ENCODE measurements at regions of chr19 and their contacts with region 1.

Region 1: GRCh38 chr19:19900729-19901444 is at the start of gene ZNF93:
- H3K4me3 ChIP-seq: peak within 1 kb of the TSS; percentile 67
- H3K27ac ChIP-seq: no peak within 1 kb of the TSS
- H3K4me1 ChIP-seq: no peaks in the 10 kb centered on the region
- CTCF ChIP-seq: no peak

Region 2: GRCh38 chr19:19721896-19722295 is 179.0 kb before region 1 on chr19:
- CTCF ChIA-PET with region 1: no interaction called
- POLR2A ChIA-PET with region 1: no interaction called
- H3K4me3 ChIP-seq: no peak overlapping the region
- H3K27ac ChIP-seq: no peak overlapping the region
- H3K4me1 ChIP-seq: no peaks in the 10 kb centered on the region
- CTCF ChIP-seq: no peak

Region 3: GRCh38 chr19:19865739-19866481 is 35.0 kb before region 1 on chr19 and contains the start of gene ZNF253:
- CTCF ChIA-PET with region 1: no interaction called
- POLR2A ChIA-PET with region 1: interaction called, 47 read pairs
- H3K4me3 ChIP-seq: peak within 1 kb of the TSS; percentile 52
- H3K27ac ChIP-seq: peak within 1 kb of the TSS; percentile 14; the same call in 1 of the 2 replicates
- H3K4me1 ChIP-seq: no peaks in the 10 kb centered on the region
- CTCF ChIP-seq: no peak

Region 4: GRCh38 chr19:20039203-20039723 is 138.4 kb after region 1 on chr19 and contains the start of gene ZNF682:
- CTCF ChIA-PET with region 1: no interaction called
- POLR2A ChIA-PET with region 1: interaction called, 15 read pairs
- H3K4me3 ChIP-seq: peak within 1 kb of the TSS; percentile 98
- H3K27ac ChIP-seq: peak within 1 kb of the TSS; percentile 49; the same call in 1 of the 2 replicates
- H3K4me1 ChIP-seq: no peaks in the 10 kb centered on the region
- CTCF ChIP-seq: no peak

Region 5: GRCh38 chr19:21492947-21493906 is 1592.3 kb after region 1 on chr19:
- CTCF ChIA-PET with region 1: no interaction called
- POLR2A ChIA-PET with region 1: no interaction called
- H3K4me3 ChIP-seq: no peak overlapping the region
- H3K27ac ChIP-seq: no peak overlapping the region
- H3K4me1 ChIP-seq: no peaks in the 10 kb centered on the region
- CTCF ChIP-seq: no peak

Measured in HEK293 (cell line).